ENCODE measurements at regions of chr16 and their contacts with region 1.

Region 1: GRCh38 chr16:67260426-67261075 is 11.8 kb downstream of the SLC9A5 start:
- DNase-seq: no peak
- H3K4me3 ChIP-seq: no peak overlapping the region
- H3K27ac ChIP-seq: no peak overlapping the region
- H3K4me1 ChIP-seq: no peaks in the 10 kb centered on the region; a peak in 1 of 7 replicates
- H3K27me3 ChIP-seq: no peaks in the 10 kb centered on the region; a peak in 1 of 7 replicates
- CTCF ChIP-seq: peak; percentile 55 to 71 (median 68)
- EP300 ChIP-seq: no peak
- POLR2A ChIP-seq: no peak
- RAD21 ChIP-seq: peak; percentile 69 to 79

Region 2: DNA sequence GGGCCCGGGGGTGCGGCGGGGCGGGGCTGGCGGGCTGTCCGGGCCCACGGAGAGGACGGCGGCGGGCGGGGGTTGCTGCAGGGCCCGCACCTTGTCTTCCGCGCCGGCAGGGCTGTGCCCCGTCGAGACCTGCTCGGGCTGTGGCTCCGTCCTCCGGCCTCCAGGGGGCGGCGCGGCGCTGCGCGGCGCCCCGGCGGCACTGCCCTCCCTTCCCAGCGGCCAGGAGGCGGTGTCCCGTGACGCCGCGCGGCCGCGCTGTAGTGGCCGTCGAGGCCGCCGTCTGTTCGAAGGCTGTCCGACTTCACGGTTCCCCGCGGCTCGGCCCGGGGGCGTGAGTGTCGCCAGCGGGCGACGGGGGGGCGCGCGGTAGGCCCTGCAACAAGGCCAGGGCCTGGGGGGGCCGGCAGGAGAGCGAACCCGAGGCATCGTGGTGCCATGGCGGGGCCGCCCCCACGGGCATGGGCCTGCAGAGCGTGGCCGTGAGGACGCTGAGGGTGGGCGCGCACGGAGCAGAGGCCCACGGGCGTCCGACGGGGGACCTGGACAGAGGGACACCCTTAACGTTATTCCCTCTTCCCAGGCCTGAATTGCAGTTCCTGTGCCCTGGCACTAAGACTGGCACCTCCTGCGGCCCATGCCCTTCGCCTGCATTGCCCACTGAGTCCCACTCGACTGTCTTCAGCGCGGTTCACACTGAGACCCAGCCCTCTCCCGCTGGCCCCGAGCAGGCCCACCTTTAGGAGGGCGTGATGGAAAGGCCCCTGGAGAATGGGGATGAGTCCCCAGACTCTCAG is 18.9 kb after region 1 on chr16 and contains the start of gene PLEKHG4:
- CTCF ChIA-PET with region 1: interaction called, 217 read pairs
- POLR2A ChIA-PET with region 1: interaction called, 4 read pairs
- DNase-seq: peak; percentile 27 to 83
- H3K4me3 ChIP-seq: peak within 1 kb of the TSS; percentile 37 to 70 (median 44)
- H3K27ac ChIP-seq: no peak within 1 kb of the TSS
- H3K4me1 ChIP-seq: 0 out of 7 replicates have a peak, but pooled peaks cover 0 to under 1% (median 0%) of the 10 kb centered on the region in 4 experiments
- H3K27me3 ChIP-seq: peaks cover 0 to 15% (median 12%) of the 10 kb centered on the region in 4 experiments; a peak in 5 of 7 replicates
- CTCF ChIP-seq: peak; percentile 78 to 98 (median 83)
- EP300 ChIP-seq: peak in 1 of 2 experiments; percentile 41; a peak in 1 of 3 replicates
- POLR2A ChIP-seq: no peak
- RAD21 ChIP-seq: peak; percentile 48 to 73
- total RNA-seq, gene PLEKHG4: 7.4 and 7.7 TPM in 2 replicates

Region 3: DNA sequence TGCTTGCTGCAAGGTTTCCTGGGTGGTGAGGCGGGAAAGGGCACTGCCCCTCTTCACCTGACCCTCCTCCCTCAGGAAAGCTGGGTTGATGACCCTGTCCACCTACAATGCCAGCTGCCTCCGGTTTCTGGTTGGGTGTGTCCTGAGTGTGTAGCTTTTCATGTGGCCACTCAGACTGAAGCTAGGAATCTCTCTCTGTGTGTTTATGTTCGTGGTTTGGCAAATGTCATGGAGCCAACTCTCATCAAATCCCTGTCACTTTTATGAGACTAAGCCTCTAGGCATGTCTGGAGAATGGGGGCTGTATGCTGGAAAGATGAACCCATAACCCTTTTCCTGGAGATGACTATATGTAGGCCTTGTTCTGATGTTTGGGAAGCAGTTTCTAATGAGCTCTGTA is 35.9 kb after region 1 on chr16:
- CTCF ChIA-PET with region 1: interaction called, 13 read pairs
- POLR2A ChIA-PET with region 1: no interaction called
- DNase-seq: no peak
- H3K4me3 ChIP-seq: no peak overlapping the region
- H3K27ac ChIP-seq: no peak overlapping the region
- H3K4me1 ChIP-seq: no peaks in the 10 kb centered on the region; a peak in 1 of 7 replicates
- H3K27me3 ChIP-seq: peaks cover 0 to 5% (median 2%) of the 10 kb centered on the region in 4 experiments; a peak in 4 of 7 replicates
- CTCF ChIP-seq: no peak
- EP300 ChIP-seq: no peak
- POLR2A ChIP-seq: no peak
- RAD21 ChIP-seq: no peak

Region 4: GRCh38 chr16:67326472-67327309 is 66.1 kb after region 1 on chr16 and contains the starts of genes KCTD19 and LRRC36:
- CTCF ChIA-PET with region 1: interaction called, 10 read pairs
- POLR2A ChIA-PET with region 1: no interaction called
- DNase-seq: peak; percentile 73 to 100
- H3K4me3 ChIP-seq: peak within 1 kb of the TSS; percentile 36 to 68 (median 52)
- H3K27ac ChIP-seq: no peak within 1 kb of the TSS
- H3K4me1 ChIP-seq: no peaks in the 10 kb centered on the region; a peak in 1 of 7 replicates
- H3K27me3 ChIP-seq: peaks cover 0 to 4% (median under 1%) of the 10 kb centered on the region in 4 experiments; a peak in 3 of 7 replicates
- CTCF ChIP-seq: peak; percentile 75 to 90 (median 78)
- EP300 ChIP-seq: no peak
- POLR2A ChIP-seq: no peak
- RAD21 ChIP-seq: peak; percentile 53 to 59
- total RNA-seq, gene KCTD19: 0.06 and 0.63 TPM in 2 replicates
- total RNA-seq, gene LRRC36: 0.44 TPM in 1 of 2 replicates, not detected in the other

Measured in H1 (cell line).